Activated CD8-positive, alpha-beta T cell treated with anti-CD3 and anti-CD28 coated beads for 36 hours (primary cell): ENCODE measurements at regions of chr16 and their contacts with region 1.

Region 1: DNA sequence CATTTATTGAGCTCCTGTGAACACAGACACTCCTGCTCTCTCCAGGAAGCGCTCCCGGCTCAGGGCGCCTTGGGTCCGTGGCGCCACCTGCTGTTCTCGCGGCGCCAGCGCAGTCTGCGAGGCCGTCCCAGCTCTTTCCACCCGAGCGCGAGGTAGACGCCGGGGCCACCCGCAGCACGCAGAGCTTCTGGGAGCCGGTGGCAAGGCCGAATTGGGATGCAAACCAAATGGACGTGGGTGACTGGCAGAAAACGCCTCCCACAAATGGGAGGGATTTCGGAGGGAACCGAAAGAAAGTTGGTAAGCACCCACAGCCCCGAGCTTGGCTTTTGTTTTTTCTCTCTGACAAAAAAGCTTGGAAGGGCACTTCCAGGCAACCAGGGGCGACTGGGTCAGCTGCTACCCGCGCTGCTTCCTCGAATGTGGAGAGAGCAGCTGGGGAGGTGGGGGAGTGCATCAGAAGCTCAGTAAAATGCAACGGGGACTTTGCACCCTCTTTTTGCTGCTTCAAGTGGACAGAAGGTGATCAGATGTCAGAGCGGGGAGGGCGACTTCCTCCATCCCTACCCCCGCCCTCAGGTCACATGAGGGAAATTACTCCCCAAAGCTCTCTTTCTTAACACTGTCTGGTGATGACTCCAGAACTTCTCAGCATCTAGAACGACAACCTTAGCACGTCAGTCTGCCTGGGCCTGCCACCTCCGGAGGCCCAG is 13.5 kb upstream of the N4BP1 start:
- DNase-seq: peak; percentile 82
- ATAC-seq: peak; percentile 95
- H3K4me3 Mint-ChIP-seq: peak overlapping the region; percentile 69
- H3K27ac Mint-ChIP-seq: peak overlapping the region; percentile 66
- H3K4me1 Mint-ChIP-seq: peaks cover 28% of the 10 kb centered on the region
- H3K27me3 Mint-ChIP-seq: no peaks in the 10 kb centered on the region
- CTCF ChIP-seq: peak; percentile 95

Region 2: GRCh38 chr16:48347191-48347865 is 276.1 kb before region 1 on chr16:
- CTCF ChIA-PET with region 1: interaction called, 24 read pairs
- POLR2A ChIA-PET with region 1: no interaction called
- intact Hi-C with region 1: no loop called
- DNase-seq: no peak
- ATAC-seq: no peak
- H3K4me3 Mint-ChIP-seq: no peak overlapping the region
- H3K27ac Mint-ChIP-seq: no peak overlapping the region
- H3K4me1 Mint-ChIP-seq: peaks cover 10% of the 10 kb centered on the region
- H3K27me3 Mint-ChIP-seq: no peaks in the 10 kb centered on the region
- CTCF ChIP-seq: no peak

Region 3: DNA sequence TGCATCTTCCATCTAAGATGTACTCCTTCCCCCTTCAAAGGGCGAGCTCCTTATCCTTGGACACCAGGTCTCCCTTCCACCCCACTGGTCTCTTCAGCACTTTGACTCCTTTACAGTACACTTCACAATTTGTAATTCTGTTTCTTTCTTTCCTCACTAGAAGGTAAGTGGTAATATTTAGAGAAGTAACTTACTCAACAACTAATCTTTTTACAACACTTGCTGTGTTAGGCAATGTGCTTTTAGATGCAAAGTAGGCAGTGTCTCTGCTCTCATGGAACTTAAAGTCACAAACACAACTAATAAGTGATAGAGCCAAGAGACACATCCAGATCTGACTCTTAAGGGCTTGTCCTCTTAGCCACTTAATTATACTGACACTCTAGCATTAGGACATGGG is 244.6 kb before region 1 on chr16:
- CTCF ChIA-PET with region 1: interaction called, 14 read pairs
- POLR2A ChIA-PET with region 1: interaction called, 6 read pairs
- intact Hi-C with region 1: no loop called
- DNase-seq: no peak
- ATAC-seq: no peak
- H3K4me3 Mint-ChIP-seq: no peak overlapping the region
- H3K27ac Mint-ChIP-seq: peak overlapping the region; percentile 3
- H3K4me1 Mint-ChIP-seq: peaks cover 45% of the 10 kb centered on the region
- H3K27me3 Mint-ChIP-seq: no peaks in the 10 kb centered on the region
- CTCF ChIP-seq: no peak

Region 4: GRCh38 chr16:48526058-48526957 is 97.2 kb before region 1 on chr16:
- CTCF ChIA-PET with region 1: interaction called, 34 read pairs
- POLR2A ChIA-PET with region 1: interaction called, 3 read pairs
- intact Hi-C with region 1: no loop called
- DNase-seq: peak; percentile 64
- ATAC-seq: peak; percentile 83
- H3K4me3 Mint-ChIP-seq: no peak overlapping the region
- H3K27ac Mint-ChIP-seq: no peak overlapping the region
- H3K4me1 Mint-ChIP-seq: peaks cover 2% of the 10 kb centered on the region
- H3K27me3 Mint-ChIP-seq: no peaks in the 10 kb centered on the region
- CTCF ChIP-seq: peak; percentile 24

Region 5: DNA sequence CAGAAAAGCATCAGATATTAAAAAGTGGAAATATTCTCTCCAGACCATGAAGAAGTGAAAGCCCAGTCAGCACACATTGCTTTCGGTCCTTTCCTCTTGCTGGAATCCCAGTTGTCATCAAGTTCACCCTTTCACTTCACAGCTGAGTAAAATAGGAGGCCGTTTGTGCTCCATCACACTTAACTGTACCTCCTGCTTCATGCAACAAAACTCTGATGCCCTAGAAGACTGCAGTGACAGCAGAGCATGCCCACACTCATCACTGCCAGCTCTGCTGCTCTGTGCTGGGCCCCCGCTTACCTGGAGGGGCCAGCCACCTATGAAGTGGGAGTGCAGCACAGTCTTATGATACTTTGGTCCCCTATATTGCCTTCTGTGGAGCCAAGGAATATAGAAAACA is 75.9 kb before region 1 on chr16:
- CTCF ChIA-PET with region 1: interaction called, 68 read pairs
- POLR2A ChIA-PET with region 1: interaction called, 3 read pairs
- intact Hi-C with region 1: no loop called
- DNase-seq: no peak
- ATAC-seq: no peak
- H3K4me3 Mint-ChIP-seq: no peak overlapping the region
- H3K27ac Mint-ChIP-seq: peak overlapping the region; percentile 8
- H3K4me1 Mint-ChIP-seq: peaks cover 12% of the 10 kb centered on the region
- H3K27me3 Mint-ChIP-seq: no peaks in the 10 kb centered on the region
- CTCF ChIP-seq: no peak

Region 6: DNA sequence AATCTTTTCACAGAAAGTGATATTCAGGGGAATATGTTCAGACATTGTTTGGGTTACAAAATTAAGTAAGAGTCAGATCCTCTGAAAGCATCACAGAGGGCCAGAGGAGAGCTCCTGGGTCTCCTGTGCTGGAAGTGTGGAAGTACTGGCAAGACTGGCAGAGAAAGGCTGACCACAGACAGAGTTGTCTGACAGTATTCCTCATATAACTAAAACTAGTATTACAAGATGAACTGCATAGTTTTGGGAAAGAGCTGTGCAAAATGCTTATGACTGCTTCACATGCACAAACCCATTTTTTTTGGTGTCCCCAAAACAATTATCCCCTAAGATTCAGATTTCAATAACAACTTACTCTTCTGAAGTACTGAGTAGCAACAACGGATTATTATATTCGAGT is 48.7 kb before region 1 on chr16:
- CTCF ChIA-PET with region 1: interaction called, 13 read pairs
- POLR2A ChIA-PET with region 1: no interaction called
- intact Hi-C with region 1: no loop called
- DNase-seq: no peak
- ATAC-seq: no peak
- H3K4me3 Mint-ChIP-seq: no peak overlapping the region
- H3K27ac Mint-ChIP-seq: no peak overlapping the region
- H3K4me1 Mint-ChIP-seq: peaks cover 79% of the 10 kb centered on the region
- H3K27me3 Mint-ChIP-seq: no peaks in the 10 kb centered on the region
- CTCF ChIP-seq: no peak